Common myeloid progenitor, CD34-positive (primary cell): ENCODE measurements at regions of chr2 and their contacts with region 1.

Region 1: GRCh38 chr2:44955593-44956392 is 14.3 kb downstream of the SIX3 start:
- DNase-seq: peak; percentile 66 to 78 (median 76)
- H3K4me3 ChIP-seq: peak overlapping the region in 5 of 7 experiments; percentile 12 to 61 (median 39)
- H3K27ac ChIP-seq: no peak overlapping the region
- H3K4me1 ChIP-seq: peaks cover 0 to 36% (median 24%) of the 10 kb centered on the region in 4 experiments
- H3K27me3 ChIP-seq: peaks cover 6 to 86% (median 46%) of the 10 kb centered on the region in 5 experiments

Region 2: GRCh38 chr2:44479122-44479887 is 476.5 kb before region 1 on chr2:
- CTCF ChIA-PET with region 1: interaction called, 14 read pairs
- POLR2A ChIA-PET with region 1: no interaction called
- DNase-seq: peak; percentile 80 to 88 (median 87)
- H3K4me3 ChIP-seq: no peak overlapping the region
- H3K27ac ChIP-seq: no peak overlapping the region
- H3K4me1 ChIP-seq: peaks cover 0 to 4% (median 0%) of the 10 kb centered on the region in 4 experiments
- H3K27me3 ChIP-seq: no peaks in the 10 kb centered on the region

Region 3: GRCh38 chr2:44560352-44560751 is 395.4 kb before region 1 on chr2:
- CTCF ChIA-PET with region 1: interaction called, 10 read pairs
- POLR2A ChIA-PET with region 1: no interaction called
- DNase-seq: peak in 2 of 3 donors; percentile 1 to 10
- H3K4me3 ChIP-seq: no peak overlapping the region
- H3K27ac ChIP-seq: no peak overlapping the region
- H3K4me1 ChIP-seq: no peaks in the 10 kb centered on the region
- H3K27me3 ChIP-seq: no peaks in the 10 kb centered on the region

Region 4: DNA sequence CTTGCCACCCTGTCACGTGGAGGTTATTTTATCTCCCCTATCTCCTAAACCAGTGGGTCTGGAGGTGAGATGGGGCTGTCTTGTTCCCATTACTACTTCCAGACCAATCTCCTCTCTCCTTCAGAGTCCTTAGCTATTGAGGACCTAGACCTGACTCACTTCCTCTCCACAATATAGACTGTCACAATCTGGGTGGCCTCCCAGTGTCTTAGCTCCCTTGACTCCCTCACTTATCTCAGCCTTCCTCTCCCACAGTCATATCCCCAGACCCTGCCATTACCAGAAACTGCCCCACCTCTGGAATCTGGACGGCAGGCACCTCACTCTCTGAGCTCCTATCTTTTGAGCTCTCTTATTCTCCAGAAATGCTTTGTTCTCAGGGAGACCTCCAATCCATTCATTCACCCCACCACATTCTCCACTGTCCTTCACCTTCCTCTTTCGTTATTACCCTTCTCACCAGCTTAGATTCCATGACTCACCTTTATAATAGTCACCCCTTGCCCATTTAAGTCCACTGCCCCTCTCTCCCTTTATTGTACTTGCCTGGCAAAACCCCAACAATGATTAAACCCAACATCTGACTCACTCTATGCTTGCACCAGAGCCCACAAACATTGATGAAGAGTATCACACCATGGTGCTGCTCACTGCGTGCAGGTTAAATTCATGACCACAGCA is 37.6 kb before region 1 on chr2:
- CTCF ChIA-PET with region 1: no interaction called
- POLR2A ChIA-PET with region 1: no interaction called
- DNase-seq: peak in 1 of 3 donors; percentile 4
- H3K4me3 ChIP-seq: no peak overlapping the region
- H3K27ac ChIP-seq: no peak overlapping the region
- H3K4me1 ChIP-seq: no peaks in the 10 kb centered on the region
- H3K27me3 ChIP-seq: peaks cover 8 to 75% (median 23%) of the 10 kb centered on the region in 5 experiments

Region 5: DNA sequence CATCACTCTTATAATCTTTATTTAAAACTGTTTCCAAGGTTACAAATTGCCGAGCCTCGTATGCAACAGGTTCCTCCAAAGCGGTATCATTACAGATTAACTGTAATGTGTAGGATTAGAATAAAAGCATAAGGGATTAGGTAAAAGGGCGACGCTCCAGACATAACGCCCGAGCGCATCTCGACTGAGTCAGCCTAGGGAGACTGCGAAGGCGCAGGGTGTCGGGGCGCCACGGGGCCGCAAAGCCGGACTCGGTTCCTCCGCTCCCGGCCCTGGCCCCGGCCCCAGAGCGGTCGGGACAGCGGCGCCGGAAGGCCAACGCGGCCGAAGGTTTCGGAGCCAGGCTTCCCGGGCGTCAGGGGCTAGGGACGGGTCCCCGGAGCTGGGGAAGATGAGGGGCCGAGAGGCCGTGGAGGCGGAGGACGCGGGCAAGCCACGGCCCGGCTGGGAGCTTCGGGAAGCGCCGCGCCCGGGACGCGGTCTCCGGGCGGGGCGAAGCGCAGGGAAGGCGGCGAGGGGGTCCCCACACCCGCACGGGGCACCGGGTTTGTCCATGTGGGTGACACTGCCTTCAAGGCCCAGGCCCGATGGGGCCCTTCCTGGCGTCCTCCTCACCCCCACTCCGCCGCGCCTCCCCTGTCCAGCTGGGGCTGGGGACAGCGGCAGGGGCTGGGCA is 27.2 kb before region 1 on chr2:
- CTCF ChIA-PET with region 1: interaction called, 16 read pairs
- POLR2A ChIA-PET with region 1: no interaction called
- DNase-seq: peak in 1 of 3 donors; percentile 25
- H3K4me3 ChIP-seq: no peak overlapping the region
- H3K27ac ChIP-seq: no peak overlapping the region
- H3K4me1 ChIP-seq: peaks cover 0 to 36% (median 28%) of the 10 kb centered on the region in 4 experiments
- H3K27me3 ChIP-seq: peaks cover 28 to 99% (median 59%) of the 10 kb centered on the region in 5 experiments

Region 6: GRCh38 chr2:44971148-44971450 is 15.3 kb after region 1 on chr2:
- CTCF ChIA-PET with region 1: interaction called, 17 read pairs
- POLR2A ChIA-PET with region 1: no interaction called
- DNase-seq: no peak
- H3K4me3 ChIP-seq: no peak overlapping the region
- H3K27ac ChIP-seq: no peak overlapping the region
- H3K4me1 ChIP-seq: peaks cover 0 to 10% (median 2%) of the 10 kb centered on the region in 4 experiments
- H3K27me3 ChIP-seq: peaks cover 0 to 4% (median 3%) of the 10 kb centered on the region in 5 experiments

Region 7: DNA sequence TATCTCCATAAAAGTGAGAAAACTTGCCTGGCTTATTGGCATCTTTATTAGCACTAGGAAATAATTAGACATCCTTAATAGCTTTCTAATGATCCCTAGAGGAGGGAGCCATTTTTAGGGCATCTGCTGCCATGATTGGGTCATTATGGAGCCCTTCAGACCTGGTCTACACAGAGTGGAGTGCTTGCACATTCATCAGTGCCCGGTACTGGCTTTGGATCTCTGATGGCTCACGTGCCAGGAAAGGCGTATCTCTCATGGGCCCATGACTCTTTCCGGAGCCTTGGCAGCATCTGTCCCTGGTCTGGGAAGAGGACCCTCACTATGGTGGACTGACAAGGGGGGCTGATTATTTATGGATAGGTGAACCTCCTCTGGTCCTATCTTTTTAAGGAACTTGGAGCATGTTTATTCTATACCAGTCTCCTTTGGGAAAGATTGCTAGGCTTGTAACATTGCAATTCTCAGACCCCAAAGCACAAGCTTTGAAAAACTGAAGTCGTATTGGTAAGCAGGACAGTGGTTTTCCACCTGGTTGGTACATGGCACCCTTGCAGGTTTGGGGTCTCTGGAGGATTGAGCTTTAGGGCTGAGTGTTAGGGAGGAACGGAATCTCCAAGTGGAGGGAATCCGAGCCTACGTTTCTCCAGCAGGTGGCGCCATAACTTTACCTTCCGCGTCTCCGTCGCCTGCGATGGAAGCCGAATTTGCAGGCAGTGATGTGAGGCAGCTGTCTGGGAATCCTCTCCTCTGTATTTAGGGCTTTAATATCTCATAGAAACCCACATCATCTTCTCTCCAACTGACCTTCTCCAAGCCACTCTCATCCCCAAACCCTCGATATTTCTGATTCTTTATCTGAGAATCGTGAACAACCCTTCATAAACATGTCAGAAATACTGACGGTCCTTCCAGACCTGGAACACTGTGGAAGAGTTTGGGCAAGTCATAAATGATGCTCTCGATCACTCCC is 25.6 kb after region 1 on chr2:
- CTCF ChIA-PET with region 1: interaction called, 10 read pairs
- POLR2A ChIA-PET with region 1: no interaction called
- DNase-seq: peak; percentile 63 to 84 (median 76)
- H3K4me3 ChIP-seq: no peak overlapping the region
- H3K27ac ChIP-seq: no peak overlapping the region
- H3K4me1 ChIP-seq: no peaks in the 10 kb centered on the region
- H3K27me3 ChIP-seq: peaks cover 0 to 2% (median 0%) of the 10 kb centered on the region in 5 experiments